ENCODE measurements at regions of chr2 and their contacts with region 1.

Region 1: DNA sequence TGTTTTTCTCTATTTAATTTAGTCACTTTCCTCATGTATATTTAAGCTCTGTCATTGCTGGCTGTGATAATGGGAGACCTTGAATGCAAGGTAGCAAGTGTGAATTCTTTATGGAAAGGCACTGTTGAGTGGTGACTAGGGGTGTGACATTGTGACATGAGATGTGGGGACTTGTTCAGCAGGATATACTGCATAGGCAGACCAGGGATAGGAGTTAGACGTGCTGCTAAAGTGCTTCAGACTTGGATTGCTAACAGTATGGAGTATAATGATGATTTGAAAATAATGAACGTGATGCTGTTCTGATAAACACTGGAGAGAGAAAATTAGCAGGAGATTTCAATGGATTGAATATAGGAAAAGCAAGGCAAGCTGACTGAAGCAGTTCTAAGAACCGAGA is 135.1 kb downstream of the NCOA1 start:
- DNase-seq: no peak
- ATAC-seq: no peak
- H3K4me3 ChIP-seq: no peak overlapping the region
- H3K4me3 Mint-ChIP-seq: no peak overlapping the region
- H3K27ac ChIP-seq: no peak overlapping the region
- H3K27ac Mint-ChIP-seq: no peak overlapping the region
- H3K4me1 ChIP-seq: no peaks in the 10 kb centered on the region
- H3K4me1 Mint-ChIP-seq: peaks cover 60% of the 10 kb centered on the region
- H3K27me3 ChIP-seq: no peaks in the 10 kb centered on the region
- H3K27me3 Mint-ChIP-seq: no peaks in the 10 kb centered on the region
- CTCF ChIP-seq: no peak

Region 2: GRCh38 chr2:23967846-23968245 is 658.3 kb before region 1 on chr2:
- CTCF ChIA-PET with region 1: no interaction called
- POLR2A ChIA-PET with region 1: no interaction called
- intact Hi-C with region 1: no loop called
- DNase-seq: no peak
- ATAC-seq: no peak
- H3K4me3 ChIP-seq: no peak overlapping the region
- H3K4me3 Mint-ChIP-seq: no peak overlapping the region
- H3K27ac ChIP-seq: no peak overlapping the region
- H3K27ac Mint-ChIP-seq: no peak overlapping the region
- H3K4me1 ChIP-seq: no peaks in the 10 kb centered on the region
- H3K4me1 Mint-ChIP-seq: no peaks in the 10 kb centered on the region
- H3K27me3 ChIP-seq: no peaks in the 10 kb centered on the region
- H3K27me3 Mint-ChIP-seq: no peaks in the 10 kb centered on the region
- CTCF ChIP-seq: no peak

Region 3: GRCh38 chr2:24659862-24660261 is 33.7 kb after region 1 on chr2:
- CTCF ChIA-PET with region 1: no interaction called
- POLR2A ChIA-PET with region 1: no interaction called
- intact Hi-C with region 1: loop called in 1 of 2 experiments (anchors 1 kb)
- DNase-seq: no peak
- ATAC-seq: no peak
- H3K4me3 ChIP-seq: no peak overlapping the region
- H3K4me3 Mint-ChIP-seq: no peak overlapping the region
- H3K27ac ChIP-seq: no peak overlapping the region
- H3K27ac Mint-ChIP-seq: no peak overlapping the region
- H3K4me1 ChIP-seq: no peaks in the 10 kb centered on the region
- H3K4me1 Mint-ChIP-seq: peaks cover 9% of the 10 kb centered on the region
- H3K27me3 ChIP-seq: no peaks in the 10 kb centered on the region
- H3K27me3 Mint-ChIP-seq: no peaks in the 10 kb centered on the region
- CTCF ChIP-seq: no peak

Region 4: DNA sequence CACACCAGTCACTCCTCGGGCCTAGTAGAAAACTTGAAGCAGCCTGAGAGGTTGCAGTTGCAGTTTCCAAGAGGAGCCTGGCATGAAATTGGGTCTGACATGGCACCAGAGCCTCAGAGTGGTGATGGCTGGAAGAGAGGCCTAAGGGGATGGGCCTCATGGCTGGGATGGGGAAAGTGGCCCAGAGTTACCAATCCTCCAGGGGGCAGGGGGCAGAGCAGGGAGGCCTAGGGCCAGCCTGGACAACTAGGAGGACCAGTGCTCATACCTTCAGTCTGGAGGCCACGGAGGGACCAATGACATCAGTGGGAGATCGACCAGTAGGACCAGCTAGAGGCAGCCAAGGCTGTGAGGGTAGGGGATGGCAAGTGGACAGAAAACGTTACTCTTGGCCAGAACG is 309.0 kb after region 1 on chr2:
- CTCF ChIA-PET with region 1: no interaction called
- POLR2A ChIA-PET with region 1: no interaction called
- intact Hi-C with region 1: no loop called
- DNase-seq: no peak
- ATAC-seq: no peak
- H3K4me3 ChIP-seq: no peak overlapping the region
- H3K4me3 Mint-ChIP-seq: no peak overlapping the region
- H3K27ac ChIP-seq: no peak overlapping the region
- H3K27ac Mint-ChIP-seq: no peak overlapping the region
- H3K4me1 ChIP-seq: no peaks in the 10 kb centered on the region
- H3K4me1 Mint-ChIP-seq: no peaks in the 10 kb centered on the region
- H3K27me3 ChIP-seq: no peaks in the 10 kb centered on the region
- H3K27me3 Mint-ChIP-seq: no peaks in the 10 kb centered on the region
- CTCF ChIP-seq: no peak